ENCODE measurements at regions of chr3 and their contacts with region 1.

Region 1: DNA sequence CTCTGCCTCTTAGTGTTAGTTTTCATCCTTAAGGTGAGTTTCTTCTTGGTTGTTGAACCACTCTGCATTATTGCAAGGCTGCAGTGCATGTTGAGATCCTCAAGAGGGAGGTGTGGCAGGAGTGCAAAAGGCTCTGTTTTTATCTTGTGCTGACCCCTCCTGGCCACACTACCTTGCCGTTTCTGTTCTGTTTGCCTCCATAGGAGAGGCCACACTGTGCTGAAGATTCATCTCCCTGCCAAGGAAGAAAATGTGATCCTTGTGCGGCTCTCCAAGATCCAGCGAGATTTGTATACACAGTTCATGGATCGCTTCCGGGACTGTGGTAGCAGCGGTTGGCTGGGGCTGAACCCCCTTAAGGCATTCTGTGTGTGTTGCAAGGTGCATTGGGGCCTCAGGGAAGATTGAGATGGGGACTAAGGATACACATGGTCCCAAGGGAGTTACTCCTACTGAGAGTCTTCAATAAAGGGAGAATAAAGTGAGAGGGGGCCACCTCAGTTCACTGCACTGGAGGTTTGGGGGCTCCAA is 33.0 kb upstream of the TEX264 start:
- DNase-seq: peak; percentile 64
- H3K4me3 ChIP-seq: no peak overlapping the region
- H3K27ac ChIP-seq: no peak overlapping the region
- H3K4me1 ChIP-seq: no peaks in the 10 kb centered on the region
- H3K27me3 ChIP-seq: no peaks in the 10 kb centered on the region
- CTCF ChIP-seq: peak; percentile 74 to 89
- POLR2A ChIP-seq: no peak

Region 2: DNA sequence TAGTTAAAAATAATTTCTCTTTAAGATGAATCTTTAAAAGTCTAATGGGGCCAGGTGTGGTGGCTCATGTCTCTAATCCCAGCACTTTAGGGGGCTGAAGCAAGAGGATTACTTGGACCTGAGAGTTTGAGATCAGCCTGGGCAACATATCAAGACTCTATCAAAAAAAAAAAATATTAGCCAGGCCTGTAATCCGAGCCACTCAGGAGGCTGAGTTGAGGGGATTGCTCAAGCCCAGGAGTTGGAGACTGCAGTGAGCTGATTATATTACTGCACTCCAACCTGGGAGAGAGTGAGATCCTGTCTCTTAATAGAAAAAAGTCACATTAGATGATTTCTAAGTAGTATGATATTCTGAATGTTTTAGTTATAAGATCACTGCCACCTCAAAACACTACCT is 575.0 kb before region 1 on chr3:
- CTCF ChIA-PET with region 1: no interaction called
- POLR2A ChIA-PET with region 1: no interaction called
- dilution Hi-C with region 1: no loop called
- intact Hi-C with region 1: loop called (anchors 5 kb)
- DNase-seq: no peak
- H3K4me3 ChIP-seq: no peak overlapping the region
- H3K27ac ChIP-seq: no peak overlapping the region
- H3K4me1 ChIP-seq: no peaks in the 10 kb centered on the region
- H3K27me3 ChIP-seq: no peaks in the 10 kb centered on the region
- CTCF ChIP-seq: no peak
- POLR2A ChIP-seq: no peak